ENCODE measurements at regions of chr2 and their contacts with region 1.

Region 1: DNA sequence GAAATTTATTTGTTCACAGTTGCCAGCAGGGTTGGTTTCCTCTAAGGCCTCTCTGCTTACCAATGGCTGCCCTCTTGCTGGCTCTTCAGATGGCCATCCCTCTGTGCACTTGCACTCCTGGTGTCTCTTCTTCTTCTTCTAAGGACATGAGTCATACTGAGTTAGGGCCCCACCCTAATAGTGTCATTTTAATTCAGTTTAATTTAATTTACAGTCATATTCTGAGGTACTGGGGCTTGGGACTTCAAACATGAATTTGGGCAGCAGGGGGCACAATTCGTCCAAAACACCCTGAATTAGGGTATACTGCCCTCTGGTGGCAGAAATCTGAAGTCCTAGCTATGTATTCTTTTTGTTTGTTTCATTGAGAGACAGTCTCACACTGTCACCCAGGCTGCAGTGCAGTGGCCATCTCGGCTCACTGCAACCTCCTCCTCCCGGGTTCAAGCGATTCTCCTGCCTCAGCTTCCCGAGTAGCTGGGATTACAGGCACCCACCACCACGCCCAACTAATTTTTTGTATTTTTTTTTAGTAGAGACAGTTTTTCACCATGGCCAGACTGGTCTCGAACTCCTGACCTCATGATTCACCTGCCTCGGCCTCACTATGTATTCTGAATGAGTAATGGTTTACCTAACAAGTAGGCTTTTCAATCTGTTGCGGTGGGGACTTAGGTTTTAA is 19.8 kb downstream of the SLC4A1AP start:
- DNase-seq: peak; percentile 93
- ATAC-seq: peak; percentile 73
- H3K4me3 Mint-ChIP-seq: no peak overlapping the region
- H3K27ac Mint-ChIP-seq: peak overlapping the region; percentile 92
- H3K4me1 Mint-ChIP-seq: peaks cover 31% of the 10 kb centered on the region
- H3K27me3 Mint-ChIP-seq: no peaks in the 10 kb centered on the region

Region 2: GRCh38 chr2:27356382-27357181 is 326.9 kb before region 1 on chr2 and contains the start of gene GTF3C2:
- CTCF ChIA-PET with region 1: interaction called, 3 read pairs
- POLR2A ChIA-PET with region 1: no interaction called
- intact Hi-C with region 1: loop called in 1 of 2 experiments (anchors 2 kb)
- DNase-seq: peak; percentile 96
- ATAC-seq: peak; percentile 82
- H3K4me3 Mint-ChIP-seq: peak within 1 kb of the TSS; percentile 98
- H3K27ac Mint-ChIP-seq: peak within 1 kb of the TSS; percentile 100
- H3K4me1 Mint-ChIP-seq: peaks cover 50% of the 10 kb centered on the region
- H3K27me3 Mint-ChIP-seq: no peaks in the 10 kb centered on the region
- total RNA-seq, gene GTF3C2: 60.3 to 70.2 TPM

Region 3: DNA sequence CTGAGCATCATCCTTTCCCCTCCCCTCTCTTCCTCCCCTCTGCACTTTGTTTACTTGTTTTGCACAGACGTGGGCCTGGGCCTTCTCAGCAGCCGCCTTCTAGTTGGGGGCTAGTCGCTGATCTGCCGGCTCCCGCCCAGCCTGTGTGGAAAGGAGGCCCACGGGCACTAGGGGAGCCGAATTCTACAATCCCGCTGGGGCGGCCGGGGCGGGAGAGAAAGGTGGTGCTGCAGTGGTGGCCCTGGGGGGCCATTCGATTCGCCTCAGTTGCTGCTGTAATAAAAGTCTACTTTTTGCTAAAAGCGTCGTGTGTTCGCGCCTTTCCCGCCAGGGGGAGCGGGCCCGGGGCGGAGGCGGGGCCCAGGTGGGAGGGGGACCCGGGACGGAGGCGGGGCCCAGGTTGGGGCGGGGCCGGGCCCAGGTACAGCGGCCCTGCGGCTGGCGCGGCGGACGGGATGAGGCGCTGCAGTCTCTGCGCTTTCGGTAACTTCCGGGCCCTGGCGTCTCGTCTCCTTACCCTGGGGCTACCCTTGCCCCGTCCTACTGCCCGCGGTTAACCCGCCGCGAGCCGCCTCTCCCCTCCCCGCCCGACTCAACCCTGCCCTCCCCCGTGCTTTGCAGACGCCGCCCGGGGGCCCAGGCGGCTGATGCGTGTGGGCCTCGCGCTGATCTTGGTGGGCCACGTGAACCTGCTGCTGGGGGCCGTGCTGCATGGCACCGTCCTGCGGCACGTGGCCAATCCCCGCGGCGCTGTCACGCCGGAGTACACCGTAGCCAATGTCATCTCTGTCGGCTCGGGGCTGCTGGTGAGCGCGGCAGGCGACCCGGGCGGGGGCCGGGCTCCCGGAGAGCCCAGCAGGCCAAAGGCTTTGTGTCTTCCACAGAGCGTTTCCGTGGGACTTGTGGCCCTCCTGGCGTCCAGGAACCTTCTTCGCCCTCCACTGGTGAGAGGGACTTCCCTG is 241.3 kb before region 1 on chr2 and contains the start of gene KRTCAP3:
- CTCF ChIA-PET with region 1: interaction called, 15 read pairs
- POLR2A ChIA-PET with region 1: interaction called, 3 read pairs
- intact Hi-C with region 1: no loop called
- DNase-seq: peak; percentile 75
- ATAC-seq: peak; percentile 80
- H3K4me3 Mint-ChIP-seq: no peak within 1 kb of the TSS
- H3K27ac Mint-ChIP-seq: no peak within 1 kb of the TSS
- H3K4me1 Mint-ChIP-seq: peaks cover 6% of the 10 kb centered on the region
- H3K27me3 Mint-ChIP-seq: no peaks in the 10 kb centered on the region
- total RNA-seq, gene KRTCAP3: 4.7 to 5.9 TPM

Region 4: GRCh38 chr2:27628767-27629709 is 54.5 kb before region 1 on chr2 and contains the starts of genes CCDC121 and GPN1:
- CTCF ChIA-PET with region 1: interaction called, 23 read pairs
- POLR2A ChIA-PET with region 1: interaction called, 5 read pairs
- intact Hi-C with region 1: loop called (anchors 2 kb)
- DNase-seq: peak; percentile 98
- ATAC-seq: peak; percentile 96
- H3K4me3 Mint-ChIP-seq: no peak within 1 kb of the TSS
- H3K27ac Mint-ChIP-seq: no peak within 1 kb of the TSS
- H3K4me1 Mint-ChIP-seq: peaks cover 37% of the 10 kb centered on the region
- H3K27me3 Mint-ChIP-seq: no peaks in the 10 kb centered on the region
- total RNA-seq, gene CCDC121: 0.11 to 0.44 TPM
- total RNA-seq, gene GPN1: 45.6 to 63.9 TPM

Region 5: DNA sequence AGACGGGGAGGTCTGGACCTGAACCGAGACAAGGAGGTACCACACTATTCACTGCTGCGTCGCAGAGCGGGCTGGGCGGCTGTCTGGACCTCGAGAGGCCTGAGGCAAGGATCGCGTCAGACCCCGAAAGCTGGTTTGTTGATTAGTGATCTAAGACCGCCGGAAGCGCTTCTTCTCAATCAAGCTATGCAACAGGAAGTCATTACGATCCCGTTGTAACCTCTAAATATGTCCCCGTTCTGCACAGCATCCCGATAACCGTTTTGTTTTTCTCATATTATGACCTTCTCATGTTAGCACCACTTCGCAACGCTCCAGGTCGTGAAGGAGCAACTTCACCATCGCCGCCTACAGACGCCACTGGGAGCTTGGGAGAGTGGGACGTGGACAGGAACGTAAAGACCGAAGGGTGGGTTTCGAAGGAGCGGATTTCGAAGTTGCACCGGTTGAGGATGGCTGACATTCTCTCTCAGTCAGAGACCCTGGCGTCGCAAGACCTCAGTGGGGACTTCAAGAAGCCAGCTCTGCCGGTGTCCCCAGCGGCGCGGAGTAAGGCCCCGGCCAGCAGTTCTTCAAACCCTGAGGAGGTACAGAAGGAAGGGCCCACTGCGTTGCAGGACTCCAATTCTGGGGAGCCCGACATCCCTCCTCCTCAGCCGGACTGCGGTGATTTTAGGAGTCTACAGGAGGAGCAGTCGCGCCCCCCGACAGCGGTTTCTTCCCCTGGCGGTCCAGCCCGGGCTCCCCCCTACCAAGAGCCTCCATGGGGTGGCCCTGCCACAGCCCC is 19.9 kb before region 1 on chr2 and contains the starts of genes SLC4A1AP and SUPT7L:
- CTCF ChIA-PET with region 1: interaction called, 47 read pairs
- POLR2A ChIA-PET with region 1: interaction called, 3 read pairs
- intact Hi-C with region 1: loop called (anchors 1 to 2 kb)
- DNase-seq: peak; percentile 80
- ATAC-seq: peak; percentile 81
- H3K4me3 Mint-ChIP-seq: peak within 1 kb of the TSS; percentile 98
- H3K27ac Mint-ChIP-seq: peak within 1 kb of the TSS; percentile 100
- H3K4me1 Mint-ChIP-seq: peaks cover 42% of the 10 kb centered on the region
- H3K27me3 Mint-ChIP-seq: no peaks in the 10 kb centered on the region
- total RNA-seq, gene SLC4A1AP: 23.8 to 25.3 TPM
- total RNA-seq, gene SUPT7L: 23.7 to 26.1 TPM

Region 6: DNA sequence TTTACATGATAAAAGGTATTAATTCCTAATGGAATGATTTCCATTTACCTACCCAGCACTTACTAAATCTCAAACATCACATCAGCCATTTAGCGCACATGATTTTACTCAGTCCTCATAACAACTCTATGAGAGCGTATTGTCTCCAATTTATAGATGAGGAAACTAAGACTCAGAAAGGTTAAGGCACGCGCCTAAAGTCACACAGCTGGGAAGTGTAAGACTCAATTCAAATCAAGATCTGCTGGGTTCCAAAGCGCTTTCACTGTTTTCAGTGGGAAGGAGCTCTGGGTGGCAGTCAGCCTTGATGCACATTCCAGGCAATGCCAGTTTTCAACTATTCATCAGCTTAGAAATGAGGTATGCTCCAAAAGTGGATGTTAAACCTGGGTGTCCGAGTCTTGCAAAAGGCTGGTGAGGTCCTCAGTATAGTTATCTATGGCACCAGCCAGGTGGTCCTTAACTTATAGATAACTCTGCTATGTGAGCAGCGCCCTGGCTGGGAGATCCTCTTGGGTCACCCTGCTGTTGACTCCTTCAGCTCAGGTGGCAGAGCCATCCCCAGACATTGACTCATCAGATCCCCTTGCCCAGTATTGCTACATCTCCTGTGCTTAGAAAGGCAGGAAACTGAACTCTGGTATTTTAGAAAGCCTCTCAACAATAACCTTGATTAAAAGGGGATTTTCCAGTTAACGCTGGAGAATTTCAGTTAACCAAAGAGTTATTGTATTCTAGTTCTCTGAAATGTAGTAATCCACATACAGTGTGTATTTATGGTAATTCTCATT is 27.3 kb after region 1 on chr2:
- CTCF ChIA-PET with region 1: interaction called, 10 read pairs
- POLR2A ChIA-PET with region 1: no interaction called
- intact Hi-C with region 1: no loop called
- DNase-seq: no peak
- ATAC-seq: peak; percentile 45
- H3K4me3 Mint-ChIP-seq: no peak overlapping the region
- H3K27ac Mint-ChIP-seq: no peak overlapping the region
- H3K4me1 Mint-ChIP-seq: peaks cover 25% of the 10 kb centered on the region
- H3K27me3 Mint-ChIP-seq: peaks cover 4% of the 10 kb centered on the region

Region 7: DNA sequence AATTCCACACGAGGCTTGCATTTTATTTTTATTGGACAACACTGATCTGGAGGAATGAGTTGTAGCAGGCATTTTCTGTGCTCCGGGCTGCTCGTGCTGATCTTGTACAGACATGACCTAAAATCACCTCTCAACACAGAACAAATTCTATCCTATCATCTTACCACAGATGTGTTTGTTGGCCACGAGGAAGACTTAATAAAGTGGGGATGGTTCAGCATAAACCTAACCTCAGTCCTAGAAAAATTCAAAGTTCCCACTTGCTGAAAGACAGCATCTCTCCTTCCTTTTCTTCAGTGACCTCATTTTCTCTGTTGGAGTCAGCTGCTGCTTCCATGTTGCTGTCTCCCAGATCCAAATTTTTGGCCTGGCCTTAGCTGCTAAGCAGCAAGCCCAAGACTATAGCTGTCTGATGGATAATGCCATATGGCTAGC is 161.3 kb after region 1 on chr2:
- CTCF ChIA-PET with region 1: no interaction called
- POLR2A ChIA-PET with region 1: no interaction called
- intact Hi-C with region 1: no loop called
- DNase-seq: no peak
- ATAC-seq: no peak
- H3K4me3 Mint-ChIP-seq: no peak overlapping the region
- H3K27ac Mint-ChIP-seq: no peak overlapping the region
- H3K4me1 Mint-ChIP-seq: no peaks in the 10 kb centered on the region
- H3K27me3 Mint-ChIP-seq: no peaks in the 10 kb centered on the region

Region 8: GRCh38 chr2:27866237-27866636 is 182.7 kb after region 1 on chr2:
- CTCF ChIA-PET with region 1: no interaction called
- POLR2A ChIA-PET with region 1: no interaction called
- intact Hi-C with region 1: no loop called
- DNase-seq: no peak
- ATAC-seq: no peak
- H3K4me3 Mint-ChIP-seq: no peak overlapping the region
- H3K27ac Mint-ChIP-seq: no peak overlapping the region
- H3K4me1 Mint-ChIP-seq: peaks cover 1% of the 10 kb centered on the region
- H3K27me3 Mint-ChIP-seq: peaks cover 2% of the 10 kb centered on the region

Measured in activated CD4-positive, alpha-beta T cell treated with anti-CD3 and anti-CD28 coated beads for 36 hours (primary cell).